OCI-LY7 (cell line): ENCODE measurements at regions of chr3 and their contacts with region 1.

Region 1: DNA sequence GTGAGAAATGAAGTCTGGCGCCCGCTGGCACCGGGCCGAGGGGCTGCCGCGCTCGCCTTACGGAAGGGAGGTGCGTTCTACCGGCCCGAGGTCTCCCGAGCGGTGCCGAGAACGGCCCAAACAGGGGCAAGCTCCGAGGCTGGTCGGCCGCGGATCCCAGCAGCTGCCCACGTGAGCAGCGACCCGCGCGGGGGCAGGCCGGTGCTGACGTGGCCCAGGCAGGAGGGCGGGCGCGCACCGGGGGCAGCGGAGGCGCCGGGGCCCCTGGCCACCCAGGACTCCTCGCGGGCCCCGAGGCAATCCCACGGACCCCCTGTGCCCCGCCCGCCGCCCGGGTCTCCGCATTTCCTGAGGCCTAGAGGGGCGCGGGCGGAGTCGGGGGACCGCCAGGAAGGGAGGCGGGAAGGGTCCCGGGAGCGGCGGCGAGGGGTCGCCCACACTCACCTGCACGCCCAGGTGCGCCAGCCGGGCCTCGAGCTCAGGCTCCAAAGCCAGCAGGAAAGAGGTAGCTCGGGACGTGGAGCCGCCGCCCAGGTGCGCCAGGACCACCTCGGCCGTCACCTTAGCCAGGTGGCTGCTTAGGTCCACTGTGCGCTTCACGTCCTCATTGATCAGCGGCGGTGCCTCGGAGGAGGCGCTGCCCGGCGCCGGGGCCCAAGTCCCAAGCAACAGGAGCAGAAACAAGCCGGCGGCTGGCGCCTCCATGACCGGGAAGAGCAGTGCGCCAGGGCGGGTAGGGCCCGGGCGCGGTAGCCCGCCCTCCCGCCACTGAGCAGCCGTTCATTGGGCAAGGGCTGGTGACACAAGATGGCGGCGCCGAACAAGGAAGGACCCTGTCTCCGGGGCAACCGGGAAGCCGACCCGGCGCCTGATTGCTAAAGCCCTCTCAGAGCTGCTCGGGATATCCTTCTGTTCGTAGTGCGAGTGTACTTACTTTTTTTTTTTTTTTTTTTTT is at the start of gene RPN1:
- DNase-seq: peak; percentile 95
- H3K4me3 ChIP-seq: peak within 1 kb of the TSS; percentile 98
- H3K27ac ChIP-seq: peak within 1 kb of the TSS; percentile 75
- H3K4me1 ChIP-seq: peaks cover 12% of the 10 kb centered on the region
- CTCF ChIP-seq: no peak
- total RNA-seq, gene RPN1: 148 and 149 TPM in 2 replicates

Region 2: DNA sequence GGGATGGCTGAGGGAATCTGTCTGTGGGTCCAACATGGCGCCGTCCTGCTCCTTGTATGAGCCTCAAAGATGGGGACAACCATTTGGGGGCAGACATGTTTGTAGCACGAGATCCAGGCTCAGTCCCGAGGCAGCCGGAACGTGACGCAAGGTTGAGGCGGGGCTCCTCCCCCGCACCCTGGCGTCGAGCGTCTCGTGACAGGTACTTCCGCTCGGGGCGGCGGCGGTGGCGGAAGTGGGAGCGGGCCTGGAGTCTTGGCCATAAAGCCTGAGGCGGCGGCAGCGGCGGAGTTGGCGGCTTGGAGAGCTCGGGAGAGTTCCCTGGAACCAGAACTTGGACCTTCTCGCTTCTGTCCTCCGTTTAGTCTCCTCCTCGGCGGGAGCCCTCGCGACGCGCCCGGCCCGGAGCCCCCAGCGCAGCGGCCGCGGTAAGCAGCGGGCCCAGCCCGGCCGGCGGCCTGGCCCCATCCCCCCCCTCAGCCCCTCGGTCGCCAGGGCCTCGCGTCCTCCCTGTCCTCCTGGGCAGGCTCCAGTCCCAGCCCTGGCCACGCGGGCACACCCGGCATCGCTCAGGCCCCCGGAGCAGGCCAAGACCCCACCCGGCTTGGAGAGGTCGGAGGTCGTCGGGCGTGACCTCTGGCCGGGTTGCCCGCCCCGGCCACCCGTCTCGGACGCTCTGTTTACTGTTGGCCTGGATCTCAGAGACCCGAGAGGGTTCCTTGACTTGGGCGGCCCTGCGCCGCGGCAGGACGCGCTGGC is 75.7 kb after region 1 on chr3 and contains the start of gene RAB7A:
- CTCF ChIA-PET with region 1: no interaction called
- POLR2A ChIA-PET with region 1: interaction called, 7 read pairs
- intact Hi-C with region 1: loop called (anchors 2 kb)
- DNase-seq: peak; percentile 98
- H3K4me3 ChIP-seq: peak within 1 kb of the TSS; percentile 93
- H3K27ac ChIP-seq: peak within 1 kb of the TSS; percentile 7
- H3K4me1 ChIP-seq: peaks cover 27% of the 10 kb centered on the region
- CTCF ChIP-seq: no peak
- total RNA-seq, gene RAB7A: 24.5 and 30.1 TPM in 2 replicates

Region 3: GRCh38 chr3:128879125-128879969 is 229.0 kb after region 1 on chr3 and contains the start of gene ACAD9:
- CTCF ChIA-PET with region 1: no interaction called
- POLR2A ChIA-PET with region 1: no interaction called
- intact Hi-C with region 1: loop called (anchors 1 kb)
- DNase-seq: peak; percentile 99
- H3K4me3 ChIP-seq: peak within 1 kb of the TSS; percentile 90
- H3K27ac ChIP-seq: peak within 1 kb of the TSS; percentile 58
- H3K4me1 ChIP-seq: peaks cover 25% of the 10 kb centered on the region
- CTCF ChIP-seq: no peak
- total RNA-seq, gene ACAD9: 88.5 and 93.7 TPM in 2 replicates